Breast epithelium (tissue), 4 donors: ENCODE measurements at regions of chr17 and their contacts with region 1.

Region 1: GRCh38 chr17:82927661-82928601 is 88.1 kb upstream of the ZNF750 start:
- DNase-seq: no peak
- H3K4me3 ChIP-seq: no peak overlapping the region
- H3K27ac ChIP-seq: no peak overlapping the region
- H3K4me1 ChIP-seq: peaks cover 0 to 5% of the 10 kb centered on the region in 2 donors
- H3K27me3 ChIP-seq: no peaks in the 10 kb centered on the region
- CTCF ChIP-seq: no peak
- POLR2A ChIP-seq: no peak

Region 2: DNA sequence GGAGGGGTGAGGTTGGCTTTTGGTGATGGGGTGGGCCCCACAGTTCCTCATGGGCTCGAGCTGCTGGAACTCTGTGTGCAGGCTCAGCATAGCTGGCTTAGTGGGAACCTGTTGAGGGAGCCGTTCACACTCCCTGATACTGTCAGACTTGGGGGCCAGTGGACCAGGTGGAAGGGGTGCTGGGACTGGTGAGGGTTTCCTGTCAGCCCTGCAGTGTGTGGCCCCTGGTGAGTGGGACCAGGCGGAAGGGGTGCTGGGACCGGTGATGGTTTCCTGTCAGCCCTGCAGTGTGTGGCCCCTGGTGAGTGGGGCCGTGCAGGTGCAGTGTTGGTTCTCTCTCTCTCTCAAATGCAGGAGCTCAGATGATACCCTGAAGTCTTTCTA is 43.0 kb before region 1 on chr17:
- intact Hi-C with region 1: loop called (anchors 1 kb)
- DNase-seq: no peak
- H3K4me3 ChIP-seq: no peak overlapping the region
- H3K27ac ChIP-seq: peak overlapping the region; percentile 27 to 35
- H3K4me1 ChIP-seq: peaks cover 3 to 24% of the 10 kb centered on the region in 2 donors
- H3K27me3 ChIP-seq: no peaks in the 10 kb centered on the region
- CTCF ChIP-seq: no peak
- POLR2A ChIP-seq: no peak